ENCODE measurements at regions of chr15 and their contacts with region 1.

Region 1: GRCh38 chr15:67065444-67066093 is at the start of gene SMAD3:
- DNase-seq: peak; percentile 87
- ATAC-seq: peak; percentile 72
- H3K4me3 Mint-ChIP-seq: peak within 1 kb of the TSS; percentile 97
- H3K27ac Mint-ChIP-seq: peak within 1 kb of the TSS; percentile 94
- H3K4me1 Mint-ChIP-seq: peaks cover 49% of the 10 kb centered on the region
- H3K27me3 Mint-ChIP-seq: peaks cover 18% of the 10 kb centered on the region
- total RNA-seq, gene SMAD3: 87.1 to 88.0 TPM

Region 2: DNA sequence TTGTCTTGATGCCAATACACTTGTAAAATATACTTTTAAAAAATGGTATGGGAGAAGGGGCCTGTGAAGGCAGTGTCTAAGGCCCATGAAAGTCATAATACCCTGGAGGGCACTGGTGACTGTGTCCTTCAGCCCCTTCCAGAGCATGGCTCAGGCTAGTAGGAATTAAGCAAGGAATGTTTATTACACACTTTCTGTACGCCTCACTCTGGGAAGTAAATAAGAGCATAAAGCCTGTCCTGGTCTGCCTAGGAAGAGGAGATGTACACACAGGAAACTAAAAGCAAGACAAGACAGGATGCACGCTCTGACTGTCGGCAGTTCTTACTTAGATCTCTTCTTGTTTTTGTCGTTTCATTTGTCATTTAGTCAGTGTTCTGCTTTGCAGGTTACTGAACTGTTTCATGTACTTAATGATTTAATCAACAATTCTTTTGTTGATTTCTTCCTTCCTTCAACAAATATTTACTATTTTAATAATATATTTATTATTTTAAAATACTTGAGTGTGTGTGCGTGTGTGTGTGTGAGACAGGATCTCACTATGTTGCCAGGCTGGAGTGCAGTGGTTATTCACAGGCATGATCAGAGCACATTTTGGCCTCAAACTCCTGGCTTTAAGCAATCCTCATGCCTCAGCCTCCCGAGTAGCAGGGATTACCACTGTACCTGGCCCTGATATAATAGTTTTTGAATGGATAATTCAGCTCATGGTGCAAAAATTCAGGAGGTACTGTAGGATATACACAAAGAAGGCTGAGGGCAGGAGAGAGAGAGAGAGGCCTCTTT is 372.6 kb before region 1 on chr15:
- CTCF ChIA-PET with region 1: no interaction called
- DNase-seq: peak; percentile 47
- ATAC-seq: peak; percentile 78
- H3K4me3 Mint-ChIP-seq: no peak overlapping the region
- H3K27ac Mint-ChIP-seq: peak overlapping the region; percentile 74
- H3K4me1 Mint-ChIP-seq: peaks cover 7% of the 10 kb centered on the region
- H3K27me3 Mint-ChIP-seq: no peaks in the 10 kb centered on the region

Region 3: GRCh38 chr15:66952756-66953522 is 112.6 kb before region 1 on chr15:
- CTCF ChIA-PET with region 1: no interaction called
- DNase-seq: no peak
- ATAC-seq: no peak
- H3K4me3 Mint-ChIP-seq: no peak overlapping the region
- H3K27ac Mint-ChIP-seq: no peak overlapping the region
- H3K4me1 Mint-ChIP-seq: peaks cover 7% of the 10 kb centered on the region
- H3K27me3 Mint-ChIP-seq: peaks cover 25% of the 10 kb centered on the region

Region 4: GRCh38 chr15:67013696-67014095 is 51.9 kb before region 1 on chr15:
- CTCF ChIA-PET with region 1: no interaction called
- DNase-seq: no peak
- ATAC-seq: no peak
- H3K4me3 Mint-ChIP-seq: no peak overlapping the region
- H3K27ac Mint-ChIP-seq: no peak overlapping the region
- H3K4me1 Mint-ChIP-seq: peaks cover 19% of the 10 kb centered on the region
- H3K27me3 Mint-ChIP-seq: peaks cover 5% of the 10 kb centered on the region

Region 5: GRCh38 chr15:67047149-67047661 is 18.4 kb before region 1 on chr15:
- CTCF ChIA-PET with region 1: no interaction called
- DNase-seq: no peak
- ATAC-seq: no peak
- H3K4me3 Mint-ChIP-seq: no peak overlapping the region
- H3K27ac Mint-ChIP-seq: no peak overlapping the region
- H3K4me1 Mint-ChIP-seq: peaks cover 20% of the 10 kb centered on the region
- H3K27me3 Mint-ChIP-seq: peaks cover 6% of the 10 kb centered on the region

Region 6: DNA sequence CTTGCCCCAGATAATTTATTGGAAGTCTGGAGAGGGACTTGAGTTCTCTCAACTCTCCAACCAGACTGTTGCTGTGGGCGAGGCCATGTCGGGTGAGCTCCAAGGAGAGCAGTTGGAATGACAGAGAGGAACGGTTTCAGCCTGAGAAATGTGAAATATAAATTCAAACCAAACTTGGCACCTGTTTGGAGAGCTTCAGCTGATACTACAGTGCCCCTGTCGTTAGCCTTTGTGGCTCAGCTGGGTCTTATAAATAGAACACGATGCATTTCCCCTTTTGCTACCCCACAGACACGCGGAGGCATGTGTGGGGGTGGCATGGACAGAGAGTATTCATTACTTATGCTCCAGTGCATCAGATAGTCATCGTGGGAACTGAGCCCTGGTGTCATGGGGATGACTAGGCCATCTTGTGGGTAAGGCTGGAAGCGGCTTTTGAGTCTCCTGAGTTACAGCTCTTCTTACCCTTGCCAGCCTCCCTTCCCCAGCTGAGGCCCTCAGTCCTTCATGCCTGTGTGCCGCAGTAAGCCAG is 15.4 kb after region 1 on chr15:
- CTCF ChIA-PET with region 1: interaction called, 138 read pairs
- DNase-seq: peak; percentile 77
- ATAC-seq: peak; percentile 6
- H3K4me3 Mint-ChIP-seq: no peak overlapping the region
- H3K27ac Mint-ChIP-seq: peak overlapping the region; percentile 93
- H3K4me1 Mint-ChIP-seq: peaks cover 94% of the 10 kb centered on the region
- H3K27me3 Mint-ChIP-seq: no peaks in the 10 kb centered on the region